Sigmoid colon (tissue), 7 donors: ENCODE measurements at regions of chr2 and their contacts with region 1.

Region 1: GRCh38 chr2:26244309-26245121 is at the starts of genes HADHA and HADHB:
- DNase-seq: peak; percentile 95
- H3K4me3 ChIP-seq: peak within 1 kb of the TSS; percentile 80 to 94 (median 86)
- H3K27ac ChIP-seq: peak within 1 kb of the TSS; percentile 91 to 96 (median 95)
- H3K4me1 ChIP-seq: peaks cover 0 to 59% (median 47%) of the 10 kb centered on the region in 4 donors
- H3K27me3 ChIP-seq: no peaks in the 10 kb centered on the region
- CTCF ChIP-seq: peak in 3 of 4 experiments; percentile 4 to 34 (median 19)
- EP300 ChIP-seq: peak in 1 of 4 donors; percentile 27
- POLR2A ChIP-seq: peak; percentile 36 to 51
- total RNA-seq, gene HADHA: 110 to 137 (median 118) TPM
- total RNA-seq, gene HADHB: 82.8 to 147 (median 119) TPM

Region 2: DNA sequence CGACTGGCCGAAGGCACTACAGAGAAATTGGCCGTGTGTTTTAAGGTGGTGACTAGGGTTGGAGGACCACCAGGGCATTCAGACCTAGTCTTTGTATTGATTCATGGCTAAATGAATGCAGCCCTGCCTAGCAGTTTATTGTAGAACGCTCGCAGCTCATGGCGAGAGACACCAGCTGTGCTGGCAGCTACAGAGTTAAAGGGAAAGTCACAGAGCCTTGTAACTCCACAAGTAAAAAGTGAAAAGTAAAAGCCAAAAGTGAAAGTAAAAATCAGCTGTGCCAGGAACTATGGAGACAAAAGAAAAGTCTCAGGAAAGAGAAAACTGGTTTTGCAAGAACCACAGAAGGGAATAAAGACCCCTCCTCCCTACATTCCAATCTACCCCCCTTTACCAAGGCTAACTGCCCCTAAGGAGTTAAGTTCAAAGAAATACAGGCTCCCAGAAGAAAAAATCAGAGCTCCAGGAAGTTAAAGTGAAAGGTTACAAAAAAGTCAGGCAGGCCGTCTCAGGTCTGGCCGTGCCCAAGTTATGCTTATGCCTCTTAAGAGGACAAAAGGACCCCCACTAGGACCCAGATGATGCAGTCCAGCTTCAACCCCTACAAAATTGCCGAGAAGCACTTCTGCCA is 55.1 kb after region 1 on chr2:
- intact Hi-C with region 1: loop called (anchors 2 kb)
- DNase-seq: no peak
- H3K4me3 ChIP-seq: peak overlapping the region; percentile 39 to 69 (median 60)
- H3K27ac ChIP-seq: peak overlapping the region; percentile 84 to 88 (median 84)
- H3K4me1 ChIP-seq: peaks cover 0 to 23% (median 21%) of the 10 kb centered on the region in 4 donors
- H3K27me3 ChIP-seq: no peaks in the 10 kb centered on the region
- CTCF ChIP-seq: no peak
- EP300 ChIP-seq: peak in 1 of 4 donors; percentile 2
- POLR2A ChIP-seq: no peak

Region 3: GRCh38 chr2:26345545-26346453 is 101.3 kb after region 1 on chr2 and contains the start of gene SELENOI:
- intact Hi-C with region 1: loop called (anchors 5 kb)
- DNase-seq: peak; percentile 99
- H3K4me3 ChIP-seq: peak within 1 kb of the TSS; percentile 64 to 90 (median 80)
- H3K27ac ChIP-seq: peak within 1 kb of the TSS; percentile 90 to 97 (median 92)
- H3K4me1 ChIP-seq: peaks cover 0 to 27% (median 26%) of the 10 kb centered on the region in 4 donors
- H3K27me3 ChIP-seq: no peaks in the 10 kb centered on the region
- CTCF ChIP-seq: no peak
- EP300 ChIP-seq: peak in 1 of 4 donors; percentile 24
- POLR2A ChIP-seq: peak; percentile 94 to 97
- total RNA-seq, gene SELENOI: 6.6 to 11.0 (median 8.9) TPM